CD4-positive, alpha-beta memory T cell (primary cell): ENCODE measurements at regions of chr1 and their contacts with region 1.

Region 1: DNA sequence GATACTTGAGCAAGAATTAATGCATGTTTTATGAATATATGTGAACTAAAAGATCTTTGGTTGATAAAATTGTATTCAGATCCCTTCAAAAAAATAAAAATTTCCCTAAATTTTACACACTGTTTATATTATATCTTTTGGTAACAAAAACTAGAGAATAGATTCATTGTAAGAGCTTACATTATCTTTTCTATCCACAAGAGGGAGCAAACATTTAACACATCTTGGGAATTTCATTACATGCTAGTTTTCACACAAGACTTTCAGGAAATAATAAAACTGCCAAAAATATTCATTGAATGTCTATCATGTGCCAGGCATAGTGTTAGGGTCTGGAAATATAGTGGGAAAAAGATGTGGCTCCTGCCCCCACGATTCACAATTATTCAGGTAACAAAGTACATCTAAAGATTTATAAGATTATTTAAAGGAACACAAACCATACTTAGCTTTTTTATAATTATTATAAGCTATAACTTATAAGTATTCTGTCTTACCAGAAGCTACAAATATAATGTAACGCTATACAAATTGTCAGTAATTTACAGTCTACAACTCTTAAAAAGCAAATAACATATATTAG is 30.6 kb downstream of the FAF1 start:
- DNase-seq: peak in 4 of 5 donors; percentile 22 to 36 (median 28)
- H3K4me3 ChIP-seq: no peak overlapping the region
- H3K4me3 Mint-ChIP-seq: no peak overlapping the region
- H3K27ac ChIP-seq: no peak overlapping the region
- H3K27ac Mint-ChIP-seq: no peak overlapping the region
- H3K4me1 ChIP-seq: no peaks in the 10 kb centered on the region
- H3K4me1 Mint-ChIP-seq: peaks cover 19 to 31% (median 26%) of the 10 kb centered on the region in 4 donors
- H3K27me3 ChIP-seq: no peaks in the 10 kb centered on the region
- H3K27me3 Mint-ChIP-seq: no peaks in the 10 kb centered on the region

Region 2: DNA sequence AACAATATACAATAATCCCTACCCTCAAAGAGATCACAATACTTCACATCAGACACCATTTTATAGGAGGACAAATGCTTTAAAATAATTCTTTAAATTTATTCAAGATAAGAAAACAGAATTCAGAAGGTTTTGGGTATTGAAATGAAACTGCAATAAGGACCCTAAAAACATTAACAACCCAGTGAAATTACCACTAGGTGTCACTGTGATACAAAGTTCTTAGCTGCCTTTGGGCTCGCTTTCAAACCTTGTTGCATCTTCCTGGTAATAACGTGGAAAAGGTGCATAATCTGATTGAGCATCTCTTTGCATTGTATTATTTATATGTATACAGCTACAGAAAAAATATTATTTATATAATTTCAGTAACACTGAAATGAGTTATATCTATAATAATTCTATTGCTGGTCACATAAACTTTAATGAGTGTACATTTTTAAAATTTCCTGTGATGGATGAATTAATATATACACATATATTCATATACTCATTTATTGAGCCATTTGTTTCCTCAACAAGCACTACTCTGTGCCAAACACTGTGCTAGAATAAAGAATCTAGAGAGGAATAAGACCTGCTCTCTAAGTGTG is 154.6 kb before region 1 on chr1:
- CTCF ChIA-PET with region 1: interaction called, 7 read pairs
- POLR2A ChIA-PET with region 1: no interaction called
- intact Hi-C with region 1: loop called (anchors 10 kb)
- DNase-seq: peak in 4 of 5 donors; percentile 26 to 32 (median 31)
- H3K4me3 ChIP-seq: no peak overlapping the region
- H3K4me3 Mint-ChIP-seq: no peak overlapping the region
- H3K27ac ChIP-seq: no peak overlapping the region
- H3K27ac Mint-ChIP-seq: peak overlapping the region in 1 of 7 donors; percentile 1
- H3K4me1 ChIP-seq: no peaks in the 10 kb centered on the region
- H3K4me1 Mint-ChIP-seq: peaks cover 7 to 13% (median 8%) of the 10 kb centered on the region in 4 donors
- H3K27me3 ChIP-seq: no peaks in the 10 kb centered on the region
- H3K27me3 Mint-ChIP-seq: no peaks in the 10 kb centered on the region

Region 3: GRCh38 chr1:50940291-50940690 is 10.8 kb after region 1 on chr1:
- CTCF ChIA-PET with region 1: interaction called, 21 read pairs
- POLR2A ChIA-PET with region 1: no interaction called
- intact Hi-C with region 1: no loop called
- DNase-seq: no peak
- H3K4me3 ChIP-seq: no peak overlapping the region
- H3K4me3 Mint-ChIP-seq: no peak overlapping the region
- H3K27ac ChIP-seq: no peak overlapping the region
- H3K27ac Mint-ChIP-seq: peak overlapping the region in 1 of 7 donors; percentile 2
- H3K4me1 ChIP-seq: no peaks in the 10 kb centered on the region
- H3K4me1 Mint-ChIP-seq: peaks cover 33 to 54% (median 43%) of the 10 kb centered on the region in 4 donors
- H3K27me3 ChIP-seq: no peaks in the 10 kb centered on the region
- H3K27me3 Mint-ChIP-seq: no peaks in the 10 kb centered on the region

Region 4: GRCh38 chr1:50959913-50960844 is 30.7 kb after region 1 on chr1 and contains the start of gene FAF1:
- CTCF ChIA-PET with region 1: interaction called, 25 read pairs
- POLR2A ChIA-PET with region 1: no interaction called
- intact Hi-C with region 1: no loop called
- DNase-seq: peak; percentile 97 to 98 (median 98)
- H3K4me3 ChIP-seq: peak within 1 kb of the TSS; percentile 89 to 91
- H3K4me3 Mint-ChIP-seq: peak within 1 kb of the TSS; percentile 93 to 99 (median 96)
- H3K27ac ChIP-seq: peak within 1 kb of the TSS; percentile 63
- H3K27ac Mint-ChIP-seq: peak within 1 kb of the TSS; percentile 90 to 98 (median 97)
- H3K4me1 ChIP-seq: peaks cover 13% of the 10 kb centered on the region
- H3K4me1 Mint-ChIP-seq: peaks cover 16 to 26% (median 21%) of the 10 kb centered on the region in 4 donors
- H3K27me3 ChIP-seq: no peaks in the 10 kb centered on the region
- H3K27me3 Mint-ChIP-seq: no peaks in the 10 kb centered on the region
- total RNA-seq, gene FAF1: 50.0 to 57.7 TPM

Region 5: DNA sequence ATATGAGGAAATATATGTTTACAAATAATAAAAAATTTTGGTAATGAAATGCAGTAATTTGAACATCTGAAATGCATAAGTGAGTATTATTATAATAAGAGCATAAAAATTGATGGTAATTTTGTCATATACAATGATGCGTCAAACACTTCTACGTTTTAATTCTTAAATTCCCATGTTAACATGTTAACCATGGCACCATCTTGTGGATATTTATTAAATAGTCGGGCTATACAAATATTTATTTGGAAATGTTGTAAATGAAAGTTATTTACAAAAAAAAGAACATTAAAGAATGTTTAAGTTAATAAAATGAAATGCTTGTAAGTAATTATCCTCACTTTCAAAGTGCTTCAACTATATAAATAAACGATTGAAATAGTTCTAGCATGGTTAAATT is 115.4 kb after region 1 on chr1:
- CTCF ChIA-PET with region 1: interaction called, 14 read pairs
- POLR2A ChIA-PET with region 1: no interaction called
- intact Hi-C with region 1: loop called (anchors 1 kb)
- DNase-seq: peak in 1 of 5 donors; percentile 9
- H3K4me3 ChIP-seq: no peak overlapping the region
- H3K4me3 Mint-ChIP-seq: no peak overlapping the region
- H3K27ac ChIP-seq: no peak overlapping the region
- H3K27ac Mint-ChIP-seq: no peak overlapping the region
- H3K4me1 ChIP-seq: no peaks in the 10 kb centered on the region
- H3K4me1 Mint-ChIP-seq: peaks cover 0 to 2% (median under 1%) of the 10 kb centered on the region in 4 donors
- H3K27me3 ChIP-seq: no peaks in the 10 kb centered on the region
- H3K27me3 Mint-ChIP-seq: peaks cover 13 to 18% of the 10 kb centered on the region in 2 donors